ENCODE measurements at regions of chr22 and their contacts with region 1.

Region 1: DNA sequence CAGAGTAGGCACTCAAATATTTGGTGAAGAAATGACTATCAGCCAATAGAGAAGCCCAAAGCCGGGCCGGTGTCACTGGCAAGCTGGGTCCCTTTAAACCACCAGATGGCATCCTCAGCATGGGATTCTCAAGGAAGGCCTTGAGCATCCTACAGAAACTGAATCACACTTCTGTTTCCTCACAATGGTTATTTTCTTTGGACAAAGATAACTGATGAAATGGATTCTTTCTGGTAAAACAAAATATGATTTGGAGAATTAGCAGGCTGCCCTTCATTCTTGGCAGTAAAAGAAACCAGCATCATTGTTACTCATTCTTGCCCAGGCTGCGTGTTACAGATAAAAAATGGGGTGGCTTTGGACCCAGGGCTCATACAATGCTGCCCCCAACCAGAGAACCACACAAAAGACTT is 30.3 kb upstream of the ASPHD2 start:
- DNase-seq: peak; percentile 48 to 57
- ATAC-seq: peak; percentile 70 to 82 (median 78)
- H3K4me3 ChIP-seq: no peak overlapping the region
- H3K27ac ChIP-seq: no peak overlapping the region
- H3K4me1 ChIP-seq: no peaks in the 10 kb centered on the region
- H3K27me3 ChIP-seq: peaks cover 0 to 5% (median 0%) of the 10 kb centered on the region in 3 donors
- CTCF ChIP-seq: peak; percentile 62

Region 2: DNA sequence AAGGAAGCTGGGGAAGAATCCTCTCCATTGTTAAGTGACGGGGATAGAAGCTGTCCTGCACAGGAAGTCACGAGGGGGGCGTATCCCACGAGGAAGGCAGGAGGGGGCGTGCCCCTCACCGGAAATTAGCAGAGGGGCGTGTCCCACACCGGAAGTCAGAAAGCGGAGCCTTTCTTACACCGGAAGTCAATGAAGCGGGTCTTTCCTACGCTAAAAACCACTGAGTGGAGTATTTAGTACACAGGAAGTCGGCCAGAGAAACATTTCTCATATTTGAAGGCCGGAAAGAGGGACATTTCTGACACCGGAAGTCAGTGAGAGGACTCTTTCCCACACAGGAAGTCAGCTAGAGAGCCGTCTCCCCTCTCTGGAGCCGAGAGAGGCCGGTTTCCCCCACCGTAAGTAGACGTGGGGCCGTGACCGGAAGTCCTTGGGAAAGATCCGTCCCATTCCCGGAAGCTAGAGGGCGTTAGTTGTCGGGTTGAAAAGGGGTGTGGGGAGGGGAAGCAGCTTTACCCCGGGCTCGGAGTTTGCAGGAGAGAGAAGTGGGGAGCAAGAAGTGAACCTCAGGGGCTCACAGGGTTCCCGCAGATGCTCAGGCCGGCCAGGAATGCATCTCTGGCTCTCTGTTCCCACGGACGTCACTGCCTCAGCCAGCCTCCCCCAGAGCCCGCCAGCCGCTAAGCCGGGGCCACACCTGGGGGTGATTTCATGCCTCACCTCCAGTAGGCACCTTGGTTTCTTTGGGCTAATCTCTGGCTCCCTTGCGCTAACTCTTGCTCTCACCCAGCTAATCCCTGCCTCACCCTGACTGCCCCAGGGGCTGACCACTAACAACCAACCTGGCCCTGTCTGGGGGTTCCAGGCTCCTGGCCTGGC is 274.1 kb after region 1 on chr22:
- intact Hi-C with region 1: loop called (anchors 5 to 10 kb)
- DNase-seq: peak; percentile 92 to 95
- ATAC-seq: peak; percentile 94 to 96 (median 95)
- H3K4me3 ChIP-seq: peak overlapping the region; percentile 95
- H3K27ac ChIP-seq: peak overlapping the region; percentile 99
- H3K4me1 ChIP-seq: peaks cover 17% of the 10 kb centered on the region
- H3K27me3 ChIP-seq: peaks cover 0 to 2% (median 0%) of the 10 kb centered on the region in 3 donors
- CTCF ChIP-seq: peak; percentile 47

Measured in psoas muscle (tissue), 8 donors.